ENCODE measurements at regions of chr12 and their contacts with region 1.

Region 1: DNA sequence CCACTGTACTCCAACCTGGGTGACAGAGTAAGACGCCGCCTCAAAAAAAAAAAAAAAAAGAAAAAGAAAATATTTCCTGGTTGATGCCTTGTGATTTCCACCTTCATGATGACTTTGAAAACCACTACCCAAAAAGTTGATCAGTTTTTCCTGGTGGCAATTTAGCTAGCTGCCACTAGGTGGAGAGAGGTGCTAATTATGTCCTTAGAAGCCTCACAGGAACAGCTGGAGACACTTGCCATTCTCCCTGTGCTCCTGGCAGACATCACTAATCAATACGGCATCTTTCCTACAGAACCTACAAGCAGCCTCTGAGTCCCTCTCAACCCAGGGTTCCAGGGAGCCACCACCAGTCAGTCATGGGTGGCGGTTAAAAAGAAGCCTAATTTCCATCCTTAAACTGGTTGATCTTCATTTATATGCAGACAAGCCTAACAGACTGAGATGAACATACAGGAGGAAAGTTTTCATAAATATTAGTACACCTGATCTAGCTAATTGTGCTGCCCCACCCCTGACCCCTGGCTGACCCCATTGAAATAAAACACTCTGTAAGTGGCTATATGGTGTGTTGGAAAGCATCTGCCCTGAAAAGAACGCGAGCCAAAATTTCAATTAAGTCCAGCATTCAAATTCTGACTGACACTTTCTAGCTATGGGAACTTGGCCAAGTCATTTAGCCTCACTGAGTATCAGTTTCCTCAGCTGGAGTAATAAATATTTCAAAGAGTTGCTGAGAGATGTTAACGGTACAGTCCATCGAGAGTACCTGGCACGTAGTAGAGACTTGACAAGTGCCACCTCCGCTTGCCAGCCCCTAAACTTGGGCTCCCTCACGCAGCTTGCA is 6.2 kb upstream of the OAS1 start:
- DNase-seq: peak; percentile 70
- ATAC-seq: no peak
- H3K4me3 ChIP-seq: no peak overlapping the region
- H3K4me3 Mint-ChIP-seq: no peak overlapping the region
- H3K27ac ChIP-seq: no peak overlapping the region
- H3K27ac Mint-ChIP-seq: peak overlapping the region; percentile 56
- H3K4me1 ChIP-seq: peaks cover 8 to 31% of the 10 kb centered on the region in 2 donors
- H3K4me1 Mint-ChIP-seq: peaks cover 38% of the 10 kb centered on the region
- H3K27me3 ChIP-seq: peaks cover 0 to 3% (median 0%) of the 10 kb centered on the region in 4 experiments
- H3K27me3 Mint-ChIP-seq: peaks cover 19% of the 10 kb centered on the region
- CTCF ChIP-seq: peak; percentile 85

Region 2: DNA sequence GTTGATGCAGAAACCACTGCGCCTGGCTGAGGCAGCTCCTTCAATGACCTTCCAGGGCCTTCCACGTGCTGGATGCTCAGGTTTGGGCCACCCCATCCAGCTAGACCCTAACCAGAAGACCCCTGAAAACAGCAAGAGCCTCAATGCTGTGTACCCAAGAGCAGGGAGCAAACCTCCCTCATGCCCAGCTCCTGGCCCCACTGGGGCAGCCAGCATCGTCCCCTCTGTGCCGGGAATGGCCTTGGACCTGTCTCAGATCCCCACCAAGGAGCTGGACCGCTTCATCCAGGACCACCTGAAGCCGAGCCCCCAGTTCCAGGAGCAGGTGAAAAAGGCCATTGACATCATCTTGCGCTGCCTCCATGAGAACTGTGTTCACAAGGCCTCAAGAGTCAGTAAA is 48.3 kb after region 1 on chr12:
- CTCF ChIA-PET with region 1: interaction called, 11 read pairs
- POLR2A ChIA-PET with region 1: no interaction called
- intact Hi-C with region 1: no loop called
- DNase-seq: no peak
- ATAC-seq: no peak
- H3K4me3 ChIP-seq: no peak overlapping the region
- H3K4me3 Mint-ChIP-seq: no peak overlapping the region
- H3K27ac ChIP-seq: no peak overlapping the region
- H3K27ac Mint-ChIP-seq: no peak overlapping the region
- H3K4me1 ChIP-seq: no peaks in the 10 kb centered on the region
- H3K4me1 Mint-ChIP-seq: no peaks in the 10 kb centered on the region
- H3K27me3 ChIP-seq: no peaks in the 10 kb centered on the region
- H3K27me3 Mint-ChIP-seq: no peaks in the 10 kb centered on the region
- CTCF ChIP-seq: no peak

Region 3: DNA sequence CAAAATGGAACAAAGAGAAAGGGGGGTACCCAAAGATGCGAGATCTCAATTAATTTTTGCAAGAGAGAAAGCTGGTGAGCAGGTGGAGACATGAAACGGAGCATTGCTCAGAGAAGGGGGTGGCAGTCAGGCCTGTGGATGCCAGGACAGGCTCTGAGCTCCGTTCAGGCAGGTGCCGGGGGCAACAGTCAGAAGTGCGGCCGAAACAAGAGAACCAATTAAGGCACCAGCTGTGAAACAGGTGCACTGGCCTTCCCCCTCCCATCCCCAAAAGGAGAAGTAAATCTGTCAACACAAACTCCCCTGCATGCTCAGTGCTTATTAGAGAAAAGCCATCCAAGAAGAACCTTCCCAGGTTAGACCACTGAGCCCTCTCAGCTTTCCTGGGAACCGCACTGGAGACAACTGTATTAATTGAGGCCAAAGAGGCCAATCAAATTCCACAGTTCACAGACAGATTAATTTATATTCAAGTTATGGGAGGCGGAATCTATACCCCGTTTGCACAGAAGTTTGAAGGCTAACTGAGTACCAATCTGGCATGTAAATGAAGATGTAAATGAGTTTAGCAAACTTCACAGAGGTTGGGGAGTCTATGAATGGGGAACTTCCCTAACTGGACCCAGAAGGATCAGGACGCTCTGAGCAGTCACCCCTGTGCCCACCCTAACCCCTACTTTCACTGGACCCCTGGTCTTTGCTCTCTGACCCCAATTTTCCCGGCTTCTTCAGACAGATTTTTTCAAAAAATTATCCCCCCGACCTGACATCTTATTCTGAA is 98.7 kb after region 1 on chr12:
- CTCF ChIA-PET with region 1: interaction called, 54 read pairs
- POLR2A ChIA-PET with region 1: no interaction called
- intact Hi-C with region 1: no loop called
- DNase-seq: peak; percentile 78
- ATAC-seq: peak; percentile 93
- H3K4me3 ChIP-seq: no peak overlapping the region
- H3K4me3 Mint-ChIP-seq: peak overlapping the region; percentile 55
- H3K27ac ChIP-seq: peak overlapping the region; percentile 55 to 56
- H3K27ac Mint-ChIP-seq: peak overlapping the region; percentile 88
- H3K4me1 ChIP-seq: peaks cover 18 to 20% of the 10 kb centered on the region in 2 donors
- H3K4me1 Mint-ChIP-seq: peaks cover 25% of the 10 kb centered on the region
- H3K27me3 ChIP-seq: no peaks in the 10 kb centered on the region
- H3K27me3 Mint-ChIP-seq: no peaks in the 10 kb centered on the region
- CTCF ChIP-seq: no peak

Region 4: GRCh38 chr12:113030875-113031525 is 130.5 kb after region 1 on chr12:
- CTCF ChIA-PET with region 1: interaction called, 111 read pairs
- POLR2A ChIA-PET with region 1: no interaction called
- intact Hi-C with region 1: loop called (anchors 1 kb)
- DNase-seq: peak; percentile 67
- ATAC-seq: no peak
- H3K4me3 ChIP-seq: no peak overlapping the region
- H3K4me3 Mint-ChIP-seq: peak overlapping the region; percentile 0
- H3K27ac ChIP-seq: no peak overlapping the region
- H3K27ac Mint-ChIP-seq: no peak overlapping the region
- H3K4me1 ChIP-seq: peaks cover 4 to 6% of the 10 kb centered on the region in 2 donors
- H3K4me1 Mint-ChIP-seq: peaks cover 5% of the 10 kb centered on the region
- H3K27me3 ChIP-seq: no peaks in the 10 kb centered on the region
- H3K27me3 Mint-ChIP-seq: peaks cover 3% of the 10 kb centered on the region
- CTCF ChIP-seq: peak; percentile 83

Region 5: DNA sequence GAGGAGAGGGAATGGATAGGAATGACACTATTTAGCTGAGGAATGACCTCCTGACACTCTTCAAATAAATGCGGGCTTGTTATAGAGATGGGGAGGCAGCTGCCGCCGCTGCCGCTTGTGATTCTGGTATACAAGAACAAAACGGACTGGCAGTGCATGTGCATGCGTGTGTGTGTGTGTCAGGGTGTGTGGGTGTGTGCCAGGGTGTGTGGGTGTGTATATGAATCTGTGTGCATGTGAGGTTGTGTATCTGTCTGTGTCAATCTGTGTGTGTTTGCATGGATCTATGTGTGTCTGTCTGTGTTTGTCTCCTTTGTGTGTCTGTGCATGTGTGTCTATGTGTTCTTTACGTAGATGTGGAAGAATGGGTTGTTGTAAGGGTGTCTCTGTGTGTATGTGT is 597.2 kb after region 1 on chr12:
- CTCF ChIA-PET with region 1: no interaction called
- POLR2A ChIA-PET with region 1: no interaction called
- intact Hi-C with region 1: no loop called
- DNase-seq: no peak
- ATAC-seq: no peak
- H3K4me3 ChIP-seq: no peak overlapping the region
- H3K4me3 Mint-ChIP-seq: no peak overlapping the region
- H3K27ac ChIP-seq: no peak overlapping the region
- H3K27ac Mint-ChIP-seq: no peak overlapping the region
- H3K4me1 ChIP-seq: no peaks in the 10 kb centered on the region
- H3K4me1 Mint-ChIP-seq: peaks cover 3% of the 10 kb centered on the region
- H3K27me3 ChIP-seq: peaks cover 0 to 27% (median 12%) of the 10 kb centered on the region in 4 experiments
- H3K27me3 Mint-ChIP-seq: peaks cover 36% of the 10 kb centered on the region
- CTCF ChIP-seq: no peak